ENCODE measurements at regions of chr12 and their contacts with region 1.

Region 1: GRCh38 chr12:53675651-53676453 is at the start of gene ATP5MC2:
- DNase-seq: peak; percentile 98 to 99
- ATAC-seq: peak; percentile 98
- H3K4me3 ChIP-seq: peak within 1 kb of the TSS; percentile 43 to 58
- H3K27ac ChIP-seq: peak within 1 kb of the TSS; percentile 80 to 99
- H3K4me1 ChIP-seq: peaks cover 0 to 2% of the 10 kb centered on the region in 2 donors
- H3K27me3 ChIP-seq: no peaks in the 10 kb centered on the region
- total RNA-seq, gene ATP5MC2: 152 to 183 TPM

Region 2: GRCh38 chr12:53543539-53543938 is 132.3 kb before region 1 on chr12:
- intact Hi-C with region 1: loop called (anchors 2 to 5 kb)
- DNase-seq: peak in 1 of 2 donors; percentile 63
- ATAC-seq: peak; percentile 90
- H3K4me3 ChIP-seq: no peak overlapping the region
- H3K27ac ChIP-seq: peak overlapping the region; percentile 16 to 88
- H3K4me1 ChIP-seq: no peaks in the 10 kb centered on the region
- H3K27me3 ChIP-seq: no peaks in the 10 kb centered on the region

Region 3: GRCh38 chr12:53887006-53887405 is 211.2 kb after region 1 on chr12:
- intact Hi-C with region 1: no loop called
- DNase-seq: no peak
- ATAC-seq: no peak
- H3K4me3 ChIP-seq: no peak overlapping the region
- H3K27ac ChIP-seq: no peak overlapping the region
- H3K4me1 ChIP-seq: no peaks in the 10 kb centered on the region
- H3K27me3 ChIP-seq: no peaks in the 10 kb centered on the region